Esophagus muscularis mucosa (tissue), 4 donors: ENCODE measurements at regions of chr4 and their contacts with region 1.

Region 1: DNA sequence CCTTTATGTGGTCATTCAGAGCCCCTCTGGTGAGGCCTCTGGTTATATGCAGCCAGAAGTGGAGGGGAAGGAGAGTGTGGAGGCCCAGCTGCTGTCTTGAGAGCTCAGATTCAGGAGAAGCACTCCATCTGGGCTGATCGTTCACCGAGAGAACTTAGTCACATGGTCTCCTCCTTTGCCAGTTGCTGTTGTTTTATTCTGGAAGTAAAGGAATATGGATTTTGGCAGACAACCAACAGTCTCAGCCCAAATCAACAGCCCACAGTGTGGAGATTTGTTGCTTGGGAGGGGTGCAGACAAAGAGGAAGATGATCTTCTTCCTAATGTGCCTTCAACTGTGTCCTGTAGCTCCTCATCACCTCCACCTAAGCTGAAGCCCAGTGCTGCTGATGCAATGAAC is 355.4 kb downstream of the ANK2 start:
- DNase-seq: no peak
- H3K4me3 ChIP-seq: no peak overlapping the region
- H3K27ac ChIP-seq: no peak overlapping the region
- H3K4me1 ChIP-seq: peaks cover 0 to 6% (median 2%) of the 10 kb centered on the region in 4 donors
- H3K27me3 ChIP-seq: no peaks in the 10 kb centered on the region
- CTCF ChIP-seq: no peak
- EP300 ChIP-seq: no peak
- POLR2A ChIP-seq: no peak

Region 2: DNA sequence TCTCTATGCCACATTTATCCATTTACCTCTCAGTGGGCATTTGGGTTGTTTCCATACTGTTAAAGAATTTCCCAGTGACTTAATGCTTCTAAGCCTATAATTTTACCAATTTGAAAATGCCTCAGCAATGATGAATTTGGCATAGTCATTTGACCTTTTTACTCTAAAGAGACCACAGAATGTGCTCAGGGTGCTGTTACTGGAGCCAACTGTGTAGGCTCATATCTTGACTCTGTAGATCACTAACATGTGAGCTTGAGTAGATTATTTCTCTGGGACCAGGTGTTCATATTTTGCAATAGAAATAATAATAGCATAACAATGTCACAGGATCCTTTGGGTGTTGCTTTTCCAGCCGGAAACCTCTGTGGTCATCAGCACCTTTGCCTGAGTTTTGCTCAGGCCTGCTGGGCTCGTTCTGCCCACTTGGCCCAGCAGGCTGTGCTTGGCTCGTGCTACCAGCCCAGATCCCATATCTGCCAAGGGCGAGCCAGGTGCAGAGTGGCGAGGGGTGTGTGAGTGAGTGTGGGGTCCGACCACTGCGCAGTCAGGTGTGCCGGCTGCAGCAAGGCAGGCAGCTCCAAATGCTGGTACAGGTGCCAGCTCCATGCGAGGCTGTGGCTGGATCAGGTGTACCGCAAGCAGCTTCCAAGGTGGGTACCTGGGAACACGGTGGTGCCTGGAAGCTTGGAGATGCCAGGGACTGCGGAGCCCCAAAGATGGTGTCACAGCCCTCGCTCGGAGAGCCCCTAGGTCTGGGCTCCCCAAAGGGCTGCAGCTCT is 426.0 kb before region 1 on chr4:
- intact Hi-C with region 1: no loop called
- DNase-seq: no peak
- H3K4me3 ChIP-seq: no peak overlapping the region
- H3K27ac ChIP-seq: no peak overlapping the region
- H3K4me1 ChIP-seq: peaks cover 0 to 6% (median 0%) of the 10 kb centered on the region in 4 donors
- H3K27me3 ChIP-seq: no peaks in the 10 kb centered on the region
- CTCF ChIP-seq: no peak
- EP300 ChIP-seq: no peak
- POLR2A ChIP-seq: no peak

Region 3: DNA sequence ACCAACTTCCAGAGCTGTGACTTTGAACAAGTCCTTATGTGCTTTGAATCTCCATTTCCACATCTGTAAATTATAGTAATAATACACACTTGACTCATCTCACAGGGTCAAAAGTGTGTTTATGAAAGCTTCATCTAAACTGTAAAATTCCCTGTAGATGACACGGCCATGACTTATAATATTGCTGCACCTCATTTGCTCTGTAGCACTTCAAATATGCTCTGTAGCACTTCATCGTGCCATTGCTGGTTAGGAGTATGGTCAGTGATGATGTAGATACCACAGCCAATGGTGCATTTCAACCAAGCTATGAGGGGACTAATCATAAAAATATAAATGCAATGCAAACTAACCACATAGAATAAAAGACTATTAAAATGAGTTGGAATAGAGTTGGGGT is 36.8 kb before region 1 on chr4:
- intact Hi-C with region 1: no loop called
- DNase-seq: no peak
- H3K4me3 ChIP-seq: no peak overlapping the region
- H3K27ac ChIP-seq: no peak overlapping the region
- H3K4me1 ChIP-seq: no peaks in the 10 kb centered on the region
- H3K27me3 ChIP-seq: no peaks in the 10 kb centered on the region
- CTCF ChIP-seq: no peak
- EP300 ChIP-seq: no peak
- POLR2A ChIP-seq: no peak

Region 4: DNA sequence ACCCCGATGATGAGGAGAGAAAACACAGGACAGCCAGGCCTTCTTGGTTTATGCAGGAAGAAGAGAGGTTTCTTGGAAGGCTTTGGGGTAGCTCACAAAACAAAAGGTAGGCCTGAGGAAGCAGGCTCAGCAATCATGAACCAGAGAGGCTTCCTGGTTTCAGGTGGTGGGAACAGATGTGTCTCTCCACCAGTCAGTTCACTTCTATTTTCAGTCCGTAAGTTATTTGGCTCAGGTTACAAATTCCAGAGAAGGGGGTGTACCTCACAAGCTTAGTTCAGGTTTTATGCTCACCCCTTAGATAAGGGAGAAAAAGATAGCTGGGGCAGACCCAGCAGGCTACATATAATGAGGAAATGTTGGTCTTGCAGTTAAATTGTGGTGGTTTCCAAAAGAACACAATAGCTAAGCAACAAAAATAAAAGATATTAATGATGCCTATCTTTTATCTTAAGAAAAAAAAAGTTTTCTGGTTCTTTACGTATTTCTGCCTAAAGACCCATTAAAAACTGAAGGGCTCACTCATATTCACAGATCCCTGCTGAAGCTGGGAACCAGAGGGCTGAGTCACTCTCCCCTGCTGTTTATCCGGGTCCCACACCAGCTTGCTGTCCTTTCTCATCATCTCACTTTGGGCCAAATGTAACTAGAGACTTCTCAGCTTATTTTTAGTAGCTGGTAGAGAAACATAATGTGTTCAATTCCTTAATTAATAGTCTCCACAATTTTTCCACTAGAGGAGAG is 179.7 kb after region 1 on chr4:
- intact Hi-C with region 1: no loop called
- DNase-seq: no peak
- H3K4me3 ChIP-seq: no peak overlapping the region
- H3K27ac ChIP-seq: peak overlapping the region in 1 of 4 donors; percentile 14
- H3K4me1 ChIP-seq: peaks cover 24 to 46% (median 28%) of the 10 kb centered on the region in 4 donors
- H3K27me3 ChIP-seq: no peaks in the 10 kb centered on the region
- CTCF ChIP-seq: no peak
- EP300 ChIP-seq: no peak
- POLR2A ChIP-seq: no peak

Region 5: GRCh38 chr4:113979148-113979904 is 574.5 kb after region 1 on chr4 and contains the start of gene ARSJ:
- intact Hi-C with region 1: loop called (anchors 10 kb)
- DNase-seq: no peak
- H3K4me3 ChIP-seq: peak within 1 kb of the TSS; percentile 68 to 72 (median 70)
- H3K27ac ChIP-seq: peak within 1 kb of the TSS; percentile 89 to 92 (median 90)
- H3K4me1 ChIP-seq: peaks cover 0 to 36% (median 26%) of the 10 kb centered on the region in 4 donors
- H3K27me3 ChIP-seq: no peaks in the 10 kb centered on the region
- CTCF ChIP-seq: peak in 1 of 3 experiments; percentile 13
- EP300 ChIP-seq: no peak
- POLR2A ChIP-seq: no peak
- total RNA-seq, gene ARSJ: 18.1 to 26.0 (median 21.2) TPM